ENCODE measurements at regions of chr3 and their contacts with region 1.

Region 1: DNA sequence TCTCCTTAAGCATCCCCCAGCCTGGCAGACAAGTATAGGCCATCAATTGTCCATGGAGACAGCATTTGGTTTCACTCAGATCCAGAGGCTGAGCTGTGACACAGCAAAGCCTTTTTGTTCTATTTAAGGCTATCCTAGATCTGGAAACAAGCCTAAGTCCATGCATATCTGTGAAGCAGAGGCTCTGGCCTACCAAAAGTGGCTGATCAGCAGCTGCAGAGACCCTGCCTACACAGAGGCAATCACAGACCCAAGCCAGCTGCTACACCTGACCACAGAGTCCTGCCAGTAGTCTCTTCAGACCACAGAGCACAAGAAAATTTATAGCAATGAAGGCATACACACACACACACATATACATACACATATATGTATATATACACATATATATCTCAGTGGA is 501.7 kb upstream of the ARPP21 start:
- DNase-seq: no peak
- ATAC-seq: no peak
- H3K4me3 ChIP-seq: no peak overlapping the region
- H3K4me3 Mint-ChIP-seq: no peak overlapping the region
- H3K27ac ChIP-seq: no peak overlapping the region
- H3K27ac Mint-ChIP-seq: no peak overlapping the region
- H3K4me1 ChIP-seq: no peaks in the 10 kb centered on the region
- H3K4me1 Mint-ChIP-seq: no peaks in the 10 kb centered on the region
- H3K27me3 ChIP-seq: no peaks in the 10 kb centered on the region
- H3K27me3 Mint-ChIP-seq: no peaks in the 10 kb centered on the region
- CTCF ChIP-seq: no peak

Region 2: GRCh38 chr3:34934660-34935059 is 203.0 kb before region 1 on chr3:
- CTCF ChIA-PET with region 1: no interaction called
- POLR2A ChIA-PET with region 1: no interaction called
- intact Hi-C with region 1: loop called in 1 of 2 experiments (anchors 10 kb)
- DNase-seq: no peak
- ATAC-seq: no peak
- H3K4me3 ChIP-seq: no peak overlapping the region
- H3K4me3 Mint-ChIP-seq: no peak overlapping the region
- H3K27ac ChIP-seq: no peak overlapping the region
- H3K27ac Mint-ChIP-seq: no peak overlapping the region
- H3K4me1 ChIP-seq: no peaks in the 10 kb centered on the region
- H3K4me1 Mint-ChIP-seq: no peaks in the 10 kb centered on the region
- H3K27me3 ChIP-seq: no peaks in the 10 kb centered on the region
- H3K27me3 Mint-ChIP-seq: no peaks in the 10 kb centered on the region
- CTCF ChIP-seq: no peak